ENCODE measurements at regions of chr10 and their contacts with region 1.

Region 1: DNA sequence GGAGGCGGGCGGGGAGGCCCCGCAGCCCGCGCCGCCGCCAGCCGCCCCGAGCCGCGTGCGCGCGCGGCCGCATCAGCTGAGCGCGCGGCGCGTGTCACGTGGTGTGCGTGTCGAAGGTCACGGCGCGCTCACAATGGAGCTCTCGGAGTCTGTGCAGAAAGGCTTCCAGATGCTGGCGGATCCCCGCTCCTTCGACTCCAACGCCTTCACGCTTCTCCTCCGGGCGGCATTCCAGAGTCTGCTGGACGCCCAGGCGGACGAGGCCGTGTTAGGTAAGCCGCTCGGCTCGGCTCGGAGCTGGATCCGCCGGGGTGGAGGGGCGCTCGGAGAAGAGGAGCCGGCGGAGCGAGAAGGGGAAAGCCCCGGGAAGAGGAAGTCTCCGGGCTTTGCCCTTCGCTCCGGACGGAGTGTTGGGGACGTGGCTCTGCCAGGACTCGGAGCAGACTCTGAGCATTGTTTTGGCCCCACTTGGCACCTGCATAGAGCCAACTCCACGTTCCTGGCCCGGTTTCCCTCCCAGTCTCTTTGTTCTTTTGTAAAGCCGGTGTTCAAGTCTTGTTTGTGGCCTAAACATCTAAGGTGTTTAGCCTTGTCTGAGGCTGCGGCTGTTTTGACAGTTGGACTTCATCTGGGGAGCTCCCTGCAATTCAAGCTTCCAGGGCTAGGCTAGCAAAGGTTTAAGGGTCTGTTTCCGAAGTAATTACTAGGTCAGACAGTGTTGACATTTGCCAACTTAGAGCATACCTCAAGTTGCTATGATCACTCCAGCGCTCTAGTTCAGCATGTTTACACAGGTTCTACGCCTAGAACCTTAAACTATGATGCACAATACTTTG is at the start of gene COMMD3:
- DNase-seq: peak; percentile 82 to 85 (median 82)
- H3K4me3 ChIP-seq: peak within 1 kb of the TSS; percentile 78 to 97 (median 91)
- H3K4me3 Mint-ChIP-seq: peak within 1 kb of the TSS; percentile 88 to 99
- H3K27ac ChIP-seq: peak within 1 kb of the TSS; percentile 89 to 91
- H3K27ac Mint-ChIP-seq: peak within 1 kb of the TSS; percentile 93 to 97 (median 95)
- H3K4me1 ChIP-seq: peaks cover 28 to 45% of the 10 kb centered on the region in 2 donors
- H3K4me1 Mint-ChIP-seq: peaks cover 29% of the 10 kb centered on the region
- H3K27me3 ChIP-seq: peaks cover 0 to 9% of the 10 kb centered on the region in 2 donors
- H3K27me3 Mint-ChIP-seq: peaks cover 0 to 12% (median 2%) of the 10 kb centered on the region in 3 donors
- CTCF ChIP-seq: no peak
- polyA plus RNA-seq, gene COMMD3: 44.9 to 140 (median 138) TPM

Region 2: DNA sequence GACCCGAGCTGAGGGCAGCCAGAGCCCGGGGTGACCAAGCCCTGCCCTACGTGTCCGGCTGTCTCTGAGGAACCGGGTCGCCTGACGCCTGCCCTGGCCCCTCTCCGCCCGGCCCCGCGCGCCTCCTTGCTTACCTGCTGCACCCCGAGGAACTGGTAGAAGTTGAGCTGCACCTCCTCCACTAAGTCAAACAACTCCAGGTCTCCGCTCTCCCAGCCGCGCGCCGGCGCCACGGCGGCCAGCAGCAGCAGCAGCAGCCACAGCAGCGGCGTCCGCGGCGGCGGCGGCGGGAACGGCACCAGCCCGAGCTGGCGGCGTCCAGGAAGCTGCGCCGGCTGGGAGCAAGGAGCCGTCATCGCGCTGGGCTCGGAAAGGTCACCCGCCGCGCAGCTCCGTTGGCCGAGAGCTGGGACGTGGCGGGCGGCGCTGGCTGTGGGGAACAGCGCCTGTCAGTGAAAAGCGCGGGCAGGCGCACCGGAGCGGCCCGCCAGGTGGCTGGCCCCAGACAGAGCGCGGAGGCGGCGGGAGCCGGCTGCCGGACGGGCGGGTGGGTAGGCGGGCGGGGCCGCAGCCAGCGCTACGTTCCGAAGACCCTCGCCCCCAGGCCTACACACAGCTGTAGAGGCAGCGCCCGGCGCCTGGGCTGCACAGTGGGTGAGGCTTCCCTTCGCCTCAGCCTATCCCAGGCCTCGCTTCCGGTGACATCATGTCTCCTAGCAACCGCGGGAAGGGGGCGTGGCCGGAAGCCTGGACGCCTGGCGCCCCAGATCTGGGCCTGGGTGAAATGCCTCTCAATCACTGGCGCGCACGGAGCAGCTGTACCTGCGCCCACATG is 313.2 kb before region 1 on chr10 and contains the start of gene DNAJC1:
- intact Hi-C with region 1: loop called (anchors 2 to 5 kb)
- DNase-seq: peak; percentile 92 to 95 (median 93)
- H3K4me3 ChIP-seq: peak within 1 kb of the TSS; percentile 56 to 90 (median 83)
- H3K4me3 Mint-ChIP-seq: peak within 1 kb of the TSS; percentile 92 to 99
- H3K27ac ChIP-seq: peak within 1 kb of the TSS; percentile 85 to 87
- H3K27ac Mint-ChIP-seq: peak within 1 kb of the TSS; percentile 85 to 94 (median 92)
- H3K4me1 ChIP-seq: peaks cover 17 to 24% of the 10 kb centered on the region in 2 donors
- H3K4me1 Mint-ChIP-seq: peaks cover 31% of the 10 kb centered on the region
- H3K27me3 ChIP-seq: no peaks in the 10 kb centered on the region
- H3K27me3 Mint-ChIP-seq: peaks cover 0 to 1% (median 0%) of the 10 kb centered on the region in 3 donors
- CTCF ChIP-seq: peak; percentile 15
- polyA plus RNA-seq, gene DNAJC1: 11.4 to 12.9 (median 12.5) TPM

Region 3: GRCh38 chr10:22228943-22229801 is 87.3 kb before region 1 on chr10:
- intact Hi-C with region 1: loop called (anchors 5 kb)
- DNase-seq: peak; percentile 82 to 86 (median 84)
- H3K4me3 ChIP-seq: peak overlapping the region; percentile 81
- H3K4me3 Mint-ChIP-seq: peak overlapping the region; percentile 87 to 90
- H3K27ac ChIP-seq: peak overlapping the region; percentile 74 to 81
- H3K27ac Mint-ChIP-seq: peak overlapping the region; percentile 79 to 94 (median 89)
- H3K4me1 ChIP-seq: peaks cover 16 to 22% of the 10 kb centered on the region in 2 donors
- H3K4me1 Mint-ChIP-seq: peaks cover 22% of the 10 kb centered on the region
- H3K27me3 ChIP-seq: peaks cover 0 to 2% of the 10 kb centered on the region in 2 donors
- H3K27me3 Mint-ChIP-seq: peaks cover under 1 to 8% (median 7%) of the 10 kb centered on the region in 3 donors
- CTCF ChIP-seq: no peak

Region 4: GRCh38 chr10:22271786-22272185 is 44.7 kb before region 1 on chr10:
- intact Hi-C with region 1: no loop called
- DNase-seq: no peak
- H3K4me3 ChIP-seq: no peak overlapping the region
- H3K4me3 Mint-ChIP-seq: no peak overlapping the region
- H3K27ac ChIP-seq: no peak overlapping the region
- H3K27ac Mint-ChIP-seq: no peak overlapping the region
- H3K4me1 ChIP-seq: no peaks in the 10 kb centered on the region
- H3K4me1 Mint-ChIP-seq: no peaks in the 10 kb centered on the region
- H3K27me3 ChIP-seq: no peaks in the 10 kb centered on the region
- H3K27me3 Mint-ChIP-seq: no peaks in the 10 kb centered on the region
- CTCF ChIP-seq: no peak

Region 5: GRCh38 chr10:22410394-22410793 is 93.9 kb after region 1 on chr10:
- intact Hi-C with region 1: no loop called
- DNase-seq: no peak
- H3K4me3 ChIP-seq: no peak overlapping the region
- H3K4me3 Mint-ChIP-seq: no peak overlapping the region
- H3K27ac ChIP-seq: no peak overlapping the region
- H3K27ac Mint-ChIP-seq: no peak overlapping the region
- H3K4me1 ChIP-seq: no peaks in the 10 kb centered on the region
- H3K4me1 Mint-ChIP-seq: no peaks in the 10 kb centered on the region
- H3K27me3 ChIP-seq: no peaks in the 10 kb centered on the region
- H3K27me3 Mint-ChIP-seq: peaks cover 0 to 6% (median 4%) of the 10 kb centered on the region in 3 donors
- CTCF ChIP-seq: no peak